Panc1 (cell line): ENCODE measurements at regions of chr19 and their contacts with region 1.

Region 1: GRCh38 chr19:22807061-22807835 is 23.3 kb upstream of the ZNF99 start:
- DNase-seq: no peak
- ATAC-seq: no peak
- H3K4me3 ChIP-seq: no peak overlapping the region
- H3K27ac ChIP-seq: no peak overlapping the region
- H3K4me1 ChIP-seq: no peaks in the 10 kb centered on the region
- H3K27me3 ChIP-seq: no peaks in the 10 kb centered on the region
- CTCF ChIP-seq: no peak

Region 2: DNA sequence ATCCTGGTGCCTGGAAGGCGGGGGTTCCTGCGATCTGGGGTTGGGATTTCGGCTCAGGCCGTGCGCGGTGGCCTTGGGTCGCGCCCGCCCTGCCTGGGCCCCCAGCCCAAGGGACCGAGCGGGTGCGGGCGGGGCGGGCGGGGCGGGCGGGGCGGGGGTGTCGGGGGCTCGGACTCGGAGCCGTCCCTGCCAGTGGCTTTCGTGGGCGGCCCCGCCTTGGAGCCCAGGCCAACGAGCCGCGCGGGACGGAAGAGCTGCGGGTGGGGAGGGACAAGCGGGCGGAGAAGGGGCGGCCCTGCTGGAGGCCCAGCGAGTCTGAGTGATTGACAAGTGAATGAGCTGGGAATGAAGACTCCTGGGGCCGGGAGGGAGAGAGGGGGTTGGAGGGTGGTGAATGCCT is 545.6 kb before region 1 on chr19:
- CTCF ChIA-PET with region 1: no interaction called
- POLR2A ChIA-PET with region 1: no interaction called
- in situ Hi-C with region 1: loop called (anchors 10 kb)
- intact Hi-C with region 1: no loop called
- DNase-seq: no peak
- ATAC-seq: no peak
- H3K4me3 ChIP-seq: no peak overlapping the region
- H3K27ac ChIP-seq: no peak overlapping the region
- H3K4me1 ChIP-seq: no peaks in the 10 kb centered on the region
- H3K27me3 ChIP-seq: no peaks in the 10 kb centered on the region
- CTCF ChIP-seq: no peak

Region 3: GRCh38 chr19:23460641-23461040 is 653.4 kb after region 1 on chr19:
- CTCF ChIA-PET with region 1: no interaction called
- POLR2A ChIA-PET with region 1: no interaction called
- in situ Hi-C with region 1: no loop called
- intact Hi-C with region 1: no loop called
- DNase-seq: no peak
- ATAC-seq: no peak
- H3K4me3 ChIP-seq: no peak overlapping the region
- H3K27ac ChIP-seq: no peak overlapping the region
- H3K4me1 ChIP-seq: no peaks in the 10 kb centered on the region
- H3K27me3 ChIP-seq: no peaks in the 10 kb centered on the region
- CTCF ChIP-seq: no peak